ENCODE measurements at regions of chr1 and their contacts with region 1.

Region 1: DNA sequence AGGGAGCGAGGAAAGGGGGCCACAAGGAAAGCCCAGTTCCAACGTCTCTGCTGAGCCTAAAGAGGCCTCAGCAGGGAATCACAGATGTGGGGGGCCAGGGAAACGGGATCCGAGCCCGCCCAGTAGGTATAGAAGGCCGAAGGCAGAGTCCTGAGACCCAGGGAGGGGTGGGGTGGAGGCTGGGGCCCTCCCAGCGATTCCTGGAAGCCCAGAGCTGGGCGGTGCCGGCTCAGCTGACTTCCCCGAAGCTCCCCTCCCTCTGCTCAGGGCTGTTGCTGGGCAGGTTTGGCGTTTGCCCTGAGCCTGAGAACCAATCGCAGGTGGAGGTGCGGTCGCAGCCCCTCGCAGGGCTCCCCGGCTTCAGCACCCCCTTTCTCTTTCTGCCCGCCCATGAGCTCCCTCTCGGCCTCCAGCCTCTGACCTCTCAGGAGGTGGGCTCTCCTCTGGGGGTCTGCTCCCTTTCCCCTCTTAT is 12.8 kb downstream of the ADAMTSL4 start:
- DNase-seq: peak; percentile 73
- ATAC-seq: peak; percentile 66
- H3K4me3 ChIP-seq: peak overlapping the region; percentile 51 to 68
- H3K27ac ChIP-seq: peak overlapping the region; percentile 95
- H3K4me1 ChIP-seq: peaks cover 42 to 58% of the 10 kb centered on the region in 2 experiments
- H3K27me3 ChIP-seq: no peaks in the 10 kb centered on the region
- CTCF ChIP-seq: no peak
- POLR2A ChIP-seq: peak; percentile 2
- RAD21 ChIP-seq: no peak

Region 2: GRCh38 chr1:150332651-150333290 is 229.2 kb before region 1 on chr1:
- CTCF ChIA-PET with region 1: no interaction called
- POLR2A ChIA-PET with region 1: no interaction called
- RAD21 ChIA-PET with region 1: no interaction called
- intact Hi-C with region 1: no loop called
- DNase-seq: no peak
- ATAC-seq: no peak
- H3K4me3 ChIP-seq: no peak overlapping the region
- H3K27ac ChIP-seq: no peak overlapping the region
- H3K4me1 ChIP-seq: no peaks in the 10 kb centered on the region
- H3K27me3 ChIP-seq: no peaks in the 10 kb centered on the region
- CTCF ChIP-seq: no peak
- POLR2A ChIP-seq: no peak
- RAD21 ChIP-seq: no peak

Region 3: DNA sequence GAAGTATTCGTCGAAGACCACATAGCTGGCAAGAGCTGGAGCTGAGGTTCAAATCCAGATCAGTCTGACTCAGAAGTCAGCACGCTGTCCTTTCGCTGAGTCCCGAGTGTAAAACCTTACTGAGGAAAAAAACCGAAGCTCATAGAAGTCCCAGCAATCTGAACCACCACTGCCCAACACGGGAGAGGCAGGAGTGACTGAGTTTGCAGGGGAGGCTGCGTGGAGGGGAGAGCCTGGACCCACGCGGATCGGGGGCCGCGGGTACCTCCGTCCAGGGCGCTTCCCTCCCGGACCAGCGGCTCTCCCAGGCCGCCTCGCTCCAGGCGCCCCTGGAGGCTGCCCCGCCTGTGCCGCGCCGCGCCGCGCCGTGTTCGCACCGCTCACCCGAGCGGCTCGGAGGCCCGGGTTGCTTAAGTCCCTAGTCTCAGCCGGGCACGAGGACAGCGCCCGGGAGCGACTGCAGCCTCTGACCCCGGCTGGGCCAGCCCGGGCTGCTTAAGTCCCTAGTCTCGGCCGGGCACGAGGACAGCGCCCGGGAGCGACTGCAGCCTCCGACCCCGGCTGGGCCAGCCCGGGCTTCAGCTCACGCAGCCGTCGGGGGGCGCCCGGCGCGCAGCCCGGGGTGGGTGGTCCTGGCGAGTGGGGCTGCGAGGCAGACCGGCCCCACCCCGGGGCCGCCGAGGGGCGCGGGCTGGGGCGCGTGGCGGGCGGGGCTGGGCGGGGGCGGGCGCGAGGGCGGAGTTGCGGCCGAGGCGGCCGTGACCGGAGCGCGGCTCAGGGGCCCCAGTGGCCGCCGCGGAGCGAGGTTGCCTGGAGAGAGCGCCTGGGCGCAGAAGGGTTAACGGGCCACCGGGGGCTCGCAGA is 13.1 kb before region 1 on chr1 and contains the start of gene ADAMTSL4:
- CTCF ChIA-PET with region 1: interaction called, 35 read pairs
- POLR2A ChIA-PET with region 1: interaction called, 3 read pairs
- RAD21 ChIA-PET with region 1: no interaction called
- intact Hi-C with region 1: no loop called
- DNase-seq: no peak
- ATAC-seq: peak; percentile 79
- H3K4me3 ChIP-seq: peak within 1 kb of the TSS; percentile 44 to 59
- H3K27ac ChIP-seq: peak within 1 kb of the TSS; percentile 62
- H3K4me1 ChIP-seq: peaks cover 10 to 30% of the 10 kb centered on the region in 2 experiments; a peak in 3 of 4 replicates
- H3K27me3 ChIP-seq: no peaks in the 10 kb centered on the region
- CTCF ChIP-seq: 0 out of 6 replicates have a peak, but pooled peaks of 1 of the 3 experiments have one; percentile 9
- POLR2A ChIP-seq: no peak
- RAD21 ChIP-seq: no peak
- total RNA-seq, gene ADAMTSL4: 4.3 TPM

Region 4: GRCh38 chr1:150596095-150596892 is 34.3 kb after region 1 on chr1:
- CTCF ChIA-PET with region 1: no interaction called
- POLR2A ChIA-PET with region 1: no interaction called
- RAD21 ChIA-PET with region 1: no interaction called
- intact Hi-C with region 1: no loop called
- DNase-seq: no peak
- ATAC-seq: peak; percentile 52; the same call in 1 of the 2 replicates
- H3K4me3 ChIP-seq: no peak overlapping the region
- H3K27ac ChIP-seq: no peak overlapping the region
- H3K4me1 ChIP-seq: peaks cover 7 to 36% of the 10 kb centered on the region in 2 experiments; a peak in 3 of 4 replicates
- H3K27me3 ChIP-seq: no peaks in the 10 kb centered on the region
- CTCF ChIP-seq: no peak
- POLR2A ChIP-seq: no peak
- RAD21 ChIP-seq: no peak

Region 5: DNA sequence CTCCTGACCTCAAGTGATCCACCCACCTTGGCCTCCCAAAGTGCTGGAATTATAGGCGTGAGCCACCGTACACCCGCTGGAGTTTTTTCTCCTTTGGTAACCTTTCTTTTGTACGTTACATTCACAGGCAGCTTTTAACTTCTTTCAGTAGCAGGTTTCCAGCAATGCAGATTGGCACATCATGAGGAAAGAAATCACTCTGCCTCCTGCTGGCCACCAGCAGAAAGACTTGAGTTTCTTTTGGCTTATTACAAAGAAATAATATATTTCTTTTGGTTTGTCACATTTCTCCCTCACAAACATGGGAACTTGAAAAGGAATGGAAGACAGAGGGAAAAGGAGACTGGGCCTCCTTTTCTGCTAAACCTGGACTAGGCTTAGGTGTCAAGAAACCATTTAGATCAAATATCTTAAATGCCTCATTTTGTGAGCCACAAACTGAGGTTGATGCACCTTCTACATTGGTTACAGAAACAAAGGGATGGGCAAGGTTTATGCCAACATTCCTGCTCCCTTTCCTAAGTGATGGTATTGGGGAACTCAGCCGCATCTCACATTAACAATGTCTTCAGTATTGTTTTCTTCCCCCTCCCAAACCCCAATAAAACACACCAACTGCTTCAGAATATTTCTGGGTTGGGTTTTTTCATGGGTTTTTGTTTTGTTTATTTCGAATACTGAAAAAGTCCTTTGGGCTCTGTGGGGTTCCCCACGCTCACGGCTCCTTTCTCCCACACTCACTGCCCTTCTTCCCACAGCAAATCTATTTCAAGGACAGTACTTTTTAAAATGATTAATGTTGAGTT is 59.7 kb after region 1 on chr1:
- CTCF ChIA-PET with region 1: interaction called, 15 read pairs
- POLR2A ChIA-PET with region 1: interaction called, 7 read pairs
- RAD21 ChIA-PET with region 1: no interaction called
- intact Hi-C with region 1: loop called (anchors 2 kb)
- DNase-seq: no peak
- ATAC-seq: no peak
- H3K4me3 ChIP-seq: no peak overlapping the region
- H3K27ac ChIP-seq: no peak overlapping the region
- H3K4me1 ChIP-seq: peaks cover 8 to 44% of the 10 kb centered on the region in 2 experiments
- H3K27me3 ChIP-seq: no peaks in the 10 kb centered on the region
- CTCF ChIP-seq: peak; percentile 56 to 71 (median 65); a peak in 5 of 6 replicates
- POLR2A ChIP-seq: no peak
- RAD21 ChIP-seq: peak; percentile 61

Region 6: DNA sequence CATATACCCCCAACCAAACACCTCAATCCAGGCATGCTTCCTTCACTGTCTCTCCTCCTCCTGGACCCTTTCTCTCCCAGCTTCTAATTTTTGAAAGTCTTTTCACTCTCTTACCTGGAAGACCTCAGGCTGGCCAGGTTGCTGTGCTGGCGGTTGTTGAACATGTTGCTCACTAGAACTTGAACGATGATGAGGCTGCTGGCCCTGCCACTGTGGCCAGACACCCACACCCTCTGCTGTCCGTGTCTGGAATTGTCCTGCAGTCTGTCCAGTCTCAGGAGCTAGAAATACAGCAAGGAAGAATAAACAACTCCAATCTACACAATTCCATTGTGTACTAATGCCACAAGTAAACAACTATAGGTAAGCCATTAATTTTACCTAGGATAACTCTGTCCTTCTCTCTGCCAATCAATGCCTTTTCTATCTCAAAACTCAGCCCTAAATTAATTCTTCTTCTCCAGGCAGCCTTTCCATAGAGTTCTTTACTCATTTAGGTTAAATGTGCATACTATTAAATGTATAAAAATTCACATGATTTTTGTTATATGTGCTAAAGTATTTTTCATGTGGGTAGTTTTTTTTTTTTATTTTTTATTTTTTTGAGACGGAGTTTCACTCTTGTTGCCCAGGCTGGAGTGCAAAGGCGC is 251.2 kb after region 1 on chr1:
- CTCF ChIA-PET with region 1: interaction called, 9 read pairs
- POLR2A ChIA-PET with region 1: no interaction called
- RAD21 ChIA-PET with region 1: no interaction called
- intact Hi-C with region 1: loop called (anchors 1 kb)
- DNase-seq: peak; percentile 16
- ATAC-seq: peak; percentile 95
- H3K4me3 ChIP-seq: no peak overlapping the region
- H3K27ac ChIP-seq: no peak overlapping the region
- H3K4me1 ChIP-seq: no peaks in the 10 kb centered on the region
- H3K27me3 ChIP-seq: no peaks in the 10 kb centered on the region
- CTCF ChIP-seq: peak; percentile 62 to 80 (median 78); a peak in 5 of 6 replicates
- POLR2A ChIP-seq: no peak
- RAD21 ChIP-seq: peak; percentile 90

Region 7: DNA sequence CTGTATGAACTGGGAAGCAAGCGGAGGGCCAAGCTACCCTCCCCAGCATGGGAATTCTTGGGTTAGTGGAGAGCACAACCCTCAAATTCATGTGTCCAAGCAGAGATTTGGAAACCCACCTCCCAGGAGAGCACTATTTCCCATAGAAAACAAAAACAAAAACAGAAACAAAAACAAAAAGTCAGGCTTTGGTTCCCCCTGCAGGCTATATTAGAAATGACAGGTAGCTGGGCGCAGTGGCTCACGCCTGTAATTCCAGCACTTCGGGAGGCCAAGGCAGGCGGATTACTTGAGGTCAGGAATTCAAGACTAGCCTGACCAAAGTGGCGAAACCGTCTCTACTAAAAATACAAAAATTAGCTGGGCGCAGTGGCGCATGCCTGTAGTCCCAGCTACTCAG is 433.9 kb after region 1 on chr1:
- CTCF ChIA-PET with region 1: interaction called, 20 read pairs
- POLR2A ChIA-PET with region 1: no interaction called
- RAD21 ChIA-PET with region 1: no interaction called
- intact Hi-C with region 1: no loop called
- DNase-seq: no peak
- ATAC-seq: peak; percentile 73
- H3K4me3 ChIP-seq: no peak overlapping the region
- H3K27ac ChIP-seq: no peak overlapping the region
- H3K4me1 ChIP-seq: peaks cover 6 to 37% of the 10 kb centered on the region in 2 experiments; a peak in 3 of 4 replicates
- H3K27me3 ChIP-seq: no peaks in the 10 kb centered on the region
- CTCF ChIP-seq: peak; percentile 61 to 85 (median 76); a peak in 5 of 6 replicates
- POLR2A ChIP-seq: no peak
- RAD21 ChIP-seq: peak; percentile 87

Measured in HCT116 (cell line).